GM23248 (cell line): ENCODE measurements at regions of chr20 and their contacts with region 1.

Region 1: GRCh38 chr20:23613676-23614075 is 8.0 kb upstream of the CST9 start:
- DNase-seq: no peak
- H3K4me3 ChIP-seq: no peak overlapping the region
- H3K27ac ChIP-seq: no peak overlapping the region
- H3K4me1 ChIP-seq: no peaks in the 10 kb centered on the region
- H3K27me3 ChIP-seq: peaks cover 3% of the 10 kb centered on the region; the same call in 1 of the 2 replicates

Region 2: DNA sequence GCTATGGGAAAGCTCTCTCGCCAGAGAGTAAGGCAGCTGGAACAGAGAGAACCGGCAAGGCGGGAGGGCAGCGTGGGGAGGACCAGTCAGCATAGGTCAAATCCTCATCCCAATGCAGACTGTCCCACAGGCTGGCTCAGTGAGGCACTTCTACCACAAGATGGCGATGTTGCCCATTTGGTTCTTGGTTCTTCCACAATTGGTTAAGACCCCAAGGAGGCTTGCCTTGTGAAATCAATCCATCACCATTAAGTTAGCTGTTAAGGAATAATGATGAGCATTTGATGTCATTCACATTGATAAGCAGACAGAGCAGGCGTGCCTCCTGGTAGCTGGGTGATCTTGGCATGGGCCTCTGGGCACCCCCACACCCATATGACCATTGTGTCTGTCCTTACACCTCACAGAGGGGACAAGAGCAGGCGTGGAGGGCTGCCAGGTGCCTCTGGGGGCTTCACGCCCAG is 171.8 kb before region 1 on chr20:
- in situ Hi-C with region 1: loop called (anchors 10 kb)
- DNase-seq: peak; percentile 79
- H3K4me3 ChIP-seq: no peak overlapping the region
- H3K27ac ChIP-seq: no peak overlapping the region
- H3K4me1 ChIP-seq: peaks cover 12% of the 10 kb centered on the region
- H3K27me3 ChIP-seq: no peaks in the 10 kb centered on the region

Region 3: GRCh38 chr20:23550232-23550631 is 63.4 kb before region 1 on chr20:
- in situ Hi-C with region 1: no loop called
- DNase-seq: no peak
- H3K4me3 ChIP-seq: no peak overlapping the region
- H3K27ac ChIP-seq: no peak overlapping the region
- H3K4me1 ChIP-seq: no peaks in the 10 kb centered on the region
- H3K27me3 ChIP-seq: no peaks in the 10 kb centered on the region; the same call in 1 of the 2 replicates